ENCODE measurements at regions of chr3 and their contacts with region 1.

Region 1: GRCh38 chr3:191809326-191809949 is 348.5 kb downstream of the PYDC2 start:
- DNase-seq: no peak
- ATAC-seq: peak in 1 of 4 donors; percentile 50
- H3K4me3 ChIP-seq: no peak overlapping the region
- H3K27ac ChIP-seq: no peak overlapping the region
- H3K4me1 ChIP-seq: no peaks in the 10 kb centered on the region
- H3K27me3 ChIP-seq: no peaks in the 10 kb centered on the region
- CTCF ChIP-seq: no peak

Region 2: DNA sequence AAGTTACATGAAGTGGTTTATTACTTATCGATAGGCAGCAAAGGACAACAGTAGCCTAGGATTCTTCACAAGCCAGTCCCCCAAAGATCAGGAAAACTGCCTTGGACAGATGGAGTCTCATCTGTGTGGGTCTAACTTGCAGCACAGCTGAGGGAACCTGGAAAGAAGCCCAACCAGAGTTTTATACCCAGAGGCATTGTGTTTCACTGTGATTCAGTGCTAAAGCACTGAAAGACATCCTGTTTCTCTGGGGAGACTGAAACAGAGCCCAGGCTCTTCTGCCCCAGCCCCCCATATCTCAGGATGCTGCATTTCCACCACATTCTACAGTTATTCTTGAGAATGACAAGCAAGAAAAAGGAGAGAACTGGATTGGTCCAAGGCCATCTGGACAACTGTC is 396.7 kb before region 1 on chr3:
- intact Hi-C with region 1: loop called in 1 of 3 experiments (anchors 10 kb)
- DNase-seq: no peak
- ATAC-seq: no peak
- H3K4me3 ChIP-seq: no peak overlapping the region
- H3K27ac ChIP-seq: no peak overlapping the region
- H3K4me1 ChIP-seq: no peaks in the 10 kb centered on the region
- H3K27me3 ChIP-seq: no peaks in the 10 kb centered on the region
- CTCF ChIP-seq: no peak

Measured in pancreas (tissue), 10 donors.